GM23248 (cell line): ENCODE measurements at regions of chr11 and their contacts with region 1.

Region 1: GRCh38 chr11:25970726-25971508 is 361.0 kb upstream of the ANO3 start:
- DNase-seq: no peak
- H3K4me3 ChIP-seq: no peak overlapping the region
- H3K27ac ChIP-seq: no peak overlapping the region
- H3K4me1 ChIP-seq: no peaks in the 10 kb centered on the region
- H3K27me3 ChIP-seq: no peaks in the 10 kb centered on the region

Region 2: DNA sequence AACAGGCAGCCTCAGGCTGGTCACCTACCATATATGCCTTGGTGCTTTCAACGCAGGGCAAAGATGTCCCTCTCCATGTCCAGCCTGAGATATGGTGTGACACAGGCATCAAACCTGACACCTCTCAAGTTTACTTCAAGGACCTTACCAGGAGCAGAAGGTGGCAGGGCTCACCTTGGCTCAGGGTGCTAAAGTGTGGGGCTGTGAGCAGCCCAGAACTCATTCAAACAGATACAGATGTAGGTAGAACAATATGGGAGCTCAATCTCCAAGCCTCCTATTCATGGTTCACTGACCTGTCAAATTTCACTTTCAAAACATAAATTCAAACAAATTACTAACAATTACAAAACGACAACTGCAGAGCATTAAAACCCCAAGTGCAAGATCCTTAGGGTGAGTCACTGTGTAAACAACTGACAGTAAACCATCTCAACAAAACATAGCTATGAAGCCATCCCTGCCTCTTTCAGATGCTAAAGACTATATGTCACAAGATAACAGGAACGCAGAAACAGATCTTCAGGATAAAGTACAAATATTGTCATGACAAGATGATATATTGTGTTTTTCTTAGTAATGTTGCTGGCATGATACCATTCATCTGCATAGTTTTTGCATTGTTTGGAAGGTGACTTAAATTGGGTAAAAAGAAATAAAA is 57.5 kb after region 1 on chr11:
- in situ Hi-C with region 1: no loop called
- DNase-seq: peak; percentile 57
- H3K4me3 ChIP-seq: no peak overlapping the region
- H3K27ac ChIP-seq: no peak overlapping the region
- H3K4me1 ChIP-seq: 0 out of 2 replicates have a peak, but pooled peaks cover 6% of the 10 kb centered on the region
- H3K27me3 ChIP-seq: 0 out of 2 replicates have a peak, but pooled peaks cover 2% of the 10 kb centered on the region

Region 3: DNA sequence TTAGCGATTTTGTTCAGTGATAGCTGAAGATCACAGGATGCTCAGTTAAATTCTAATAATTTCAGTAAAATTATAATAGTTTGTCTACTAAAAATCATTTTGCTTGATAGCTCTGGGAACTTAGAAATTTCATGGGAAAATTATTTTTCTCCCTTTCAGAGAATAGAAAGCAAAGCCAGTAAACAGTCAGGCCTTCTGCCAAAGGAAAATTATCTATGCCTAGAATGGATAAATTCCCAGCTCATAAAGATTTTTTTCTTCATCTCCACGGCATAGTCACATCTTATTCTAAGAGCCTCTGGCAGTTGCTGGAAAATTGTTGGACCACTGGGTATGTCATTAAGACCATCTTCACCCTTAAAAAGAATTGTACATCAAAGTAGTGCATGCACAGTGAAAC is 191.4 kb after region 1 on chr11:
- in situ Hi-C with region 1: no loop called
- DNase-seq: no peak
- H3K4me3 ChIP-seq: no peak overlapping the region
- H3K27ac ChIP-seq: no peak overlapping the region
- H3K4me1 ChIP-seq: no peaks in the 10 kb centered on the region
- H3K27me3 ChIP-seq: no peaks in the 10 kb centered on the region

Region 4: GRCh38 chr11:26276798-26277424 is 306.0 kb after region 1 on chr11:
- in situ Hi-C with region 1: loop called (anchors 5 kb)
- DNase-seq: peak; percentile 65
- H3K4me3 ChIP-seq: no peak overlapping the region
- H3K27ac ChIP-seq: no peak overlapping the region
- H3K4me1 ChIP-seq: peaks cover 4% of the 10 kb centered on the region; the same call in 1 of the 2 replicates
- H3K27me3 ChIP-seq: no peaks in the 10 kb centered on the region

Region 5: GRCh38 chr11:26522912-26523610 is 552.1 kb after region 1 on chr11:
- in situ Hi-C with region 1: no loop called
- DNase-seq: peak; percentile 36
- H3K4me3 ChIP-seq: no peak overlapping the region
- H3K27ac ChIP-seq: no peak overlapping the region
- H3K4me1 ChIP-seq: no peaks in the 10 kb centered on the region
- H3K27me3 ChIP-seq: no peaks in the 10 kb centered on the region